ENCODE measurements at regions of chr17 and their contacts with region 1.

Region 1: DNA sequence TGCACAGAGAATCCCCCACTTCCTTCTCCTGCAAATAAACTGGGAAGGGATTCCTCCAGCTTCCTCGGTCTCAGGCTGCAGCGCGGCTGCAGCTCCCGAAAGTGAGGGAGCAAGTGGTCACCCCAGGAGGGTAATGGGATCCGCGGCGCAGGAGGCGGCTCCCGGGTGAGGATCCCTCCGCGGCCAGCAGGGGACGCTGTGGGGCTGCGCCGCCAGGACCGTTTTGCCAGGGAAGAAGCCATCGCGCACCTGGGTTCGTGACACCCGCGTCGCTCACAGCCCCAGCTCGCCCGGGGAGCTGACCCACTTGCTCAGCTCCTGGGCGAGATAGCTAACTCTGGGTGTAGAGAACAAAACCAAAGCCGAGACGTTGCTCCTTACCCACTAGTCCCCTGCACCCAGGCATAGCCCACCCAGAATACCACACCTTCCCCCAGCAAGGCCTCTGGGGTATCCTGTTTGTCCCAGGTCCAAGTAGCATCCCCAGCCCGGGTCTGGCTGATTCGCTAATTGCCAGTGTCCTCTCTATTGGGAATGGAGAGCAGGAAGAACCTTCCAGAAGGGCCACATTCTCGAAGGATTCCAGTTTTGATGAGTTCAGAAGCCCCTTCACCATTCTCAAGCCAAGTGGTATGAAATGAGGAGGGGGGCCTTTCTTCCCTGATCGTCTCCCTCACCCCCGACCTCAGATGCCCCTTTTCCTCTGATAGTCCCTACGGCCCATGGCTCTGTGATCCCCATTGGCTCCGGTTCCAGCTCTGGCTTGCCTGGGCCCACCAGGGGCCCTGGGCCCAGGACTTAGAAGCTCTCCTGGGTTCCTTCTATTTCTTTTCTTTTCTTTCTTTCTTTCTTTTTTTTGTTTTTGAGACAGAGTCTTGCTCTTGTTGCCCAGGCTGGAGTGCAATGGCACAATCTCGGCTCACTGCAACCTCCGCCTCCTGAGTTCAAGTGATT is 14.1 kb downstream of the CYGB start:
- DNase-seq: peak; percentile 95
- H3K4me3 ChIP-seq: peak overlapping the region in 1 of 2 experiments; percentile 38; a peak in 1 of 4 replicates
- H3K27ac ChIP-seq: no peak overlapping the region
- H3K4me1 ChIP-seq: peaks cover 0 to 26% of the 10 kb centered on the region in 2 experiments; a peak in 1 of 4 replicates
- H3K27me3 ChIP-seq: peaks cover 17% of the 10 kb centered on the region; the same call in 1 of the 2 replicates
- CTCF ChIP-seq: peak; percentile 100
- EP300 ChIP-seq: no peak
- RAD21 ChIP-seq: peak; percentile 99

Region 2: GRCh38 chr17:76452660-76453430 is 70.5 kb before region 1 on chr17 and contains the start of gene UBE2O:
- CTCF ChIA-PET with region 1: interaction called, 33 read pairs
- POLR2A ChIA-PET with region 1: no interaction called
- DNase-seq: peak; percentile 100
- H3K4me3 ChIP-seq: peak within 1 kb of the TSS; percentile 74 to 95
- H3K27ac ChIP-seq: peak within 1 kb of the TSS; percentile 41 to 70
- H3K4me1 ChIP-seq: peaks cover 14 to 21% of the 10 kb centered on the region in 2 experiments
- H3K27me3 ChIP-seq: no peaks in the 10 kb centered on the region
- CTCF ChIP-seq: peak; percentile 64
- EP300 ChIP-seq: no peak; a peak in 1 of 4 replicates
- RAD21 ChIP-seq: no peak
- polyA plus RNA-seq, gene UBE2O: 20.0 and 25.4 TPM in 2 replicates

Region 3: DNA sequence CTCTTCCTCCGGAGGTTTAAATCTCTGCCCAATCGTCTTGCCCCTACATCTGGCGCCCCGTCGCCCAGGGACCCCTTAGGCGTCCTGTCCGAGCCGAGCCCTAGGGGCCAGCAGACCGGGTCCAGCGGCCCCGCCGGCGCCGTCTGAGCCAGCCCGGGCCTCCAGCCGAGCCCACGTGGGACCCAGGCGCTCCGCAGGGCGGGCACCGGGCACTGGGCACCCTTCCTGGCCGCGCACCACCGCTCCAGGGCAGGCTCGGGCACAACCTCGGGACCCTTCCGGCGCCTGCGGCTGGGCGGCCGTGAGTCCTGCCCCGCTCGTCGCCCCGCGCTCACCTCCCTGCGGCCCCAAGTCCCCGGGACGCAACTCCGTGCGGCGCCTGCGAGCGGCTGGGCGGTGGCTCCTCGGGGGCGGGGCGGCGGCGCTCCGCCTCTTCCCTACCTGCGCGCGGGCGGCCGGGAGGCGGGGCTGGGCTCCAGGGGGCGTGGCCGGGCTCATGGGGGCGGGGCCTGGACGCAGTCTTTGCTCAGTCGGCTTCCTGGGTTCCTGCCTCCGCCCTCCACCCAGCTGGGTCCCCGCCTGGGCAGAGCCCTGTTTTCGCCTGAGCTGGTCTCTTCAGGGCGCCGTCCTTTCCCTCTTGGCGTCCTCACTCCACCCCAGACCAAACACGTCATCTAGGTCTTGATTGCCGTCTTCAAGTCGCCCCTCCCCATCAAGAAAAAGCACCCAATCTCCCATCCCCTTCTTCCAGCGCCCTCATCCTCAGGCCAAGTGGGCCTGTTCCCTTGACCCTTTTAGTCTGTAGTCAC is 22.1 kb before region 1 on chr17 and contains the start of gene RHBDF2:
- CTCF ChIA-PET with region 1: interaction called, 201 read pairs
- POLR2A ChIA-PET with region 1: no interaction called
- DNase-seq: peak; percentile 97
- H3K4me3 ChIP-seq: peak within 1 kb of the TSS; percentile 65 to 78
- H3K27ac ChIP-seq: peak within 1 kb of the TSS in 1 of 2 experiments; percentile 30; a peak in 1 of 4 replicates
- H3K4me1 ChIP-seq: peaks cover 21 to 50% of the 10 kb centered on the region in 2 experiments; a peak in 3 of 4 replicates
- H3K27me3 ChIP-seq: no peaks in the 10 kb centered on the region
- CTCF ChIP-seq: no peak
- EP300 ChIP-seq: no peak
- RAD21 ChIP-seq: no peak
- polyA plus RNA-seq, gene RHBDF2: 14.0 and 16.1 TPM in 2 replicates

Region 4: GRCh38 chr17:76557368-76558197 is 34.2 kb after region 1 on chr17:
- CTCF ChIA-PET with region 1: interaction called, 319 read pairs
- POLR2A ChIA-PET with region 1: interaction called, 5 read pairs
- DNase-seq: peak; percentile 98
- H3K4me3 ChIP-seq: peak overlapping the region; percentile 83 to 92
- H3K27ac ChIP-seq: peak overlapping the region; percentile 71 to 89
- H3K4me1 ChIP-seq: peaks cover 26 to 42% of the 10 kb centered on the region in 2 experiments
- H3K27me3 ChIP-seq: no peaks in the 10 kb centered on the region
- CTCF ChIP-seq: peak; percentile 78
- EP300 ChIP-seq: no peak
- RAD21 ChIP-seq: peak; percentile 50

Region 5: DNA sequence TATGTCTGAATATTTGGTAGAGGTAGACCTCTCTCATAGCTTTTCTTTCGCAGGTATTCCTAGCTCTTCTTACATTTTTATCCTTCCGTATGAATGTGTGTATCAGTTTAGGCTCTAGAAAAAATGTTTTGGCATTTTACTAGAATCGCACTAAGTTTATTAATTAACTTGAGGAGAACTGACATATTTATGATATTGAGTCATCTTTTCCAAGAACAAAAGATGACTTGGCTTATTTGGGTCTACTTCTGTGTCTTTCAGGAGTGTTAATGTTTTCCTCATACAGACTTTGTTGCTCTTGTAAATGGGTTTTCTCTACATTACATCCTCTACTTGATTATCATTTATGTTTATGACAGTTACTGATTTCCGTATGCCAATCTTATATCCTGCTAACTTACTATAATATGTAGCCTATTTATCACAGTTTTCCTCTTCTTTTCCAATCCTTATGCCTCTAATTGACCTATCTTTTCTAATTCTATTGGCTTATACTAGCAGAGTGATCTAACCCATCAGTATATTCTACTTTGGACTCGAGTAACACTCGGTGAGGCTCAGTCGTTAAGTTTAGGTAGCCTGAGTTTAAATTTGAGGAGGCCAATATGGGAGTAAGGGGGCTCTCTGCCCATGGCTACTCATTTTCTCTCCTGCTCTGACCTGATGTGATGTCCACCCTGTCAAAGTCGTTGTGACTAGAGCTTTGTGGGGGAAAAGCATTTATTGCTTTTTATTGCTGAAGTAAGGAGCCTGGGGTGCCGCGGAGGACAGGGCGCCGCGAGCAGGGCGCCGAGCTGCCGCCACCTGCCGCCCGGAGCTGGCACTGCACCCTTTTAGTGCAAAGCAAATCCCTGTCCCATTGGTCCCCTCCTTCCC is 100.1 kb after region 1 on chr17:
- CTCF ChIA-PET with region 1: interaction called, 111 read pairs
- POLR2A ChIA-PET with region 1: no interaction called
- DNase-seq: peak; percentile 94
- H3K4me3 ChIP-seq: peak overlapping the region in 1 of 2 experiments; percentile 15; a peak in 2 of 4 replicates
- H3K27ac ChIP-seq: peak overlapping the region; percentile 47 to 53; a peak in 3 of 4 replicates
- H3K4me1 ChIP-seq: 0 out of 4 replicates have a peak, but pooled peaks cover 0 to 8% of the 10 kb centered on the region in 2 experiments
- H3K27me3 ChIP-seq: peaks cover 19% of the 10 kb centered on the region; the same call in 1 of the 2 replicates
- CTCF ChIP-seq: peak; percentile 99
- EP300 ChIP-seq: peak in 1 of 2 experiments; percentile 3; a peak in 1 of 4 replicates
- RAD21 ChIP-seq: peak; percentile 91

Region 6: GRCh38 chr17:76671123-76671911 is 148.0 kb after region 1 on chr17:
- CTCF ChIA-PET with region 1: interaction called, 16 read pairs
- POLR2A ChIA-PET with region 1: no interaction called
- DNase-seq: peak; percentile 99
- H3K4me3 ChIP-seq: peak overlapping the region; percentile 69 to 70
- H3K27ac ChIP-seq: peak overlapping the region in 1 of 2 experiments; percentile 94; a peak in 3 of 4 replicates
- H3K4me1 ChIP-seq: peaks cover 0 to 33% of the 10 kb centered on the region in 2 experiments; a peak in 2 of 4 replicates
- H3K27me3 ChIP-seq: no peaks in the 10 kb centered on the region
- CTCF ChIP-seq: no peak
- EP300 ChIP-seq: no peak; a peak in 1 of 4 replicates
- RAD21 ChIP-seq: no peak